Naive thymus-derived CD8-positive, alpha-beta T cell (primary cell): ENCODE measurements at regions of chr1 and their contacts with region 1.

Region 1: DNA sequence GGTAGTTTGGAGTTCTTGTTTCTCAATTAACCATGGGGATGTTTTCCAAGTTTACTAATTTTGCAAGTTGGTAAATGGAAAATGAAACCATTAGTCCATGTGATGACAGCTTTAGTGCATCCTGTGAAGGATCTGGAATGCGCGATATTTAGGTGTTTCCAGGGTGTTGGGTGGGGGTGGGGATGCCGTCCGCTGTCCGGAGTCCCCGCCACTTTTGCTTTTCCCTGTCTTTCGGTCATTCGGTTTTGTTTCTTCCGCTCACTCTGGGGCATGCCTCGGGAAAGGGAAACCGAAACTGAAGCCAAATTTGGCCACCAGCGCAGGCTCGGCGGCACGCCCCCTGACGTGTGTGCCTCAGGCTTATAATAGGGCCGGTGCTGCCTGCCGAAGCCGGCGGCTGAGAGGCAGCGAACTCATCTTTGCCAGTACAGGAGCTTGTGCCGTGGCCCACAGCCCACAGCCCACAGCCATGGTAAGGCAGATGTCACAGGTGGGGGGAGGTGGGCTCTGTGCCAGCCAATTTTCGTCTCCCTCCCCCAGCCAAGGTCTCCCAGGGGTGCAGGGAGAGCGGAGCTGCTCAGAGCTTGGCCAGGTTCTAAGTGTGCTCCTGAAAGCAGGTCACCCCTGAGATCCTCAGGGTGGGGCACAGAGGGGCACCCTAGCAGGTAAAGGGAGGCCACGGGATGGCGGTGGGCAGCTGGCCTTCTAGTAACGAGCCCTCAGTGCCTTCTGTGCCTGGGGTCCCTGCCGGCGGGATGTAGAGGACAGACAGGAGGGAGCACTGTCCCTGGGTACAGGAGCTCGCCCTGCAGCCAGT is at the start of gene ISG15:
- DNase-seq: peak; percentile 78 to 94 (median 86)
- ATAC-seq: peak; percentile 96 to 97
- H3K4me3 Mint-ChIP-seq: peak within 1 kb of the TSS; percentile 92 to 99 (median 97)
- H3K27ac Mint-ChIP-seq: peak within 1 kb of the TSS; percentile 98 to 100 (median 98)
- H3K4me1 Mint-ChIP-seq: peaks cover 13 to 49% (median 37%) of the 10 kb centered on the region in 4 donors
- H3K27me3 Mint-ChIP-seq: peaks cover 0 to 4% (median 0%) of the 10 kb centered on the region in 5 donors
- polyA plus RNA-seq, gene ISG15: 133 to 220 (median 217) TPM

Region 2: DNA sequence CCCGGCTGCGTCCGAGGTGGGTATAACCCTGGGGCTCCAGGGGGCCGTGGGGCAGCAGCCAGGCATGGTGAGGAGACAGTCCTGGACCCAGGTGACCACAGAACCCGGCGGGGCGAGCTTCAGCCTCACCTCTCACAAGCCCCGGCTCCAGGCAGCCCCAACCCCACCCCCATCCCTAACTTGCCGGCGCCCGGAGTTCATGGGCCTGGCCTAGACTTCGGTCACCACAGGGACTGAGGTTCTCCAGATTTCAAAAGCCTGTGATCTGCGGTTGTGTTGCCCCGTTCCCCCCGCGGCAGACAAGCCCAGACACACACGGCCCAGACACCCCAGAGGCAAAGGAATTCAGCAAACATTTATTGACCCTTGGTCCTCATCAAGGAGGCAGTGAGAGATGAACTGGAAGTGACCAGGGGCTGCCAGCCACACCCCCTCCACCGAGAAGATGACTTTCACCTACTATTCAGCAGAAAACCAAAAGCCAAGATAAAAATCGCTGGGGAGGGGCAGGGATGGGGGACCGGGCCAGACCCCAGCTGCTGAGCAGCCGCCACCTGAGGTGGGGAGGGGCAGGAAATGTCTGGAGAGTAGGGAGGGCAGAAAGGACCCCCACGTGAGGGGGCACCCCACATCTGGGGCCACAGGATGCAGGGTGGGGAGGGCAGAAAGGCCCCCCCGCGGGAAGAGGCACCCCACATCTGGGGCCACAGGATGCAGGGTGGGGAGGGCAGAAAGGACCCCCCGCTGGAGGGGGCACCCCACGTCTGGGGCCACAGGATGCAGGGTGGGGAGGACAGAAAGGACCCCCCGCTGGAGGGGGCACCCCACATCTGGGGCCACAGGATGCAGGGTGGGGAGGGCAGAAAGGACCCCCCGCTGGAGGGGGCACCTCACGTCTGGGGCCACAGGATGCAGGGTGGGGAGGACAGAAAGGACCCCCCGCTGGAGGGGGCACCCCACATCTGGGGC is 17.4 kb before region 1 on chr1:
- POLR2A ChIA-PET with region 1: interaction called, 26 read pairs
- DNase-seq: peak in 2 of 10 donors; percentile 25 to 26
- ATAC-seq: no peak
- H3K4me3 Mint-ChIP-seq: peak overlapping the region in 6 of 10 donors; percentile 39 to 65 (median 48)
- H3K27ac Mint-ChIP-seq: peak overlapping the region in 2 of 10 donors; percentile 5 to 52
- H3K4me1 Mint-ChIP-seq: peaks cover 9 to 30% (median 14%) of the 10 kb centered on the region in 4 donors
- H3K27me3 Mint-ChIP-seq: peaks cover 4 to 25% (median 7%) of the 10 kb centered on the region in 5 donors

Region 3: DNA sequence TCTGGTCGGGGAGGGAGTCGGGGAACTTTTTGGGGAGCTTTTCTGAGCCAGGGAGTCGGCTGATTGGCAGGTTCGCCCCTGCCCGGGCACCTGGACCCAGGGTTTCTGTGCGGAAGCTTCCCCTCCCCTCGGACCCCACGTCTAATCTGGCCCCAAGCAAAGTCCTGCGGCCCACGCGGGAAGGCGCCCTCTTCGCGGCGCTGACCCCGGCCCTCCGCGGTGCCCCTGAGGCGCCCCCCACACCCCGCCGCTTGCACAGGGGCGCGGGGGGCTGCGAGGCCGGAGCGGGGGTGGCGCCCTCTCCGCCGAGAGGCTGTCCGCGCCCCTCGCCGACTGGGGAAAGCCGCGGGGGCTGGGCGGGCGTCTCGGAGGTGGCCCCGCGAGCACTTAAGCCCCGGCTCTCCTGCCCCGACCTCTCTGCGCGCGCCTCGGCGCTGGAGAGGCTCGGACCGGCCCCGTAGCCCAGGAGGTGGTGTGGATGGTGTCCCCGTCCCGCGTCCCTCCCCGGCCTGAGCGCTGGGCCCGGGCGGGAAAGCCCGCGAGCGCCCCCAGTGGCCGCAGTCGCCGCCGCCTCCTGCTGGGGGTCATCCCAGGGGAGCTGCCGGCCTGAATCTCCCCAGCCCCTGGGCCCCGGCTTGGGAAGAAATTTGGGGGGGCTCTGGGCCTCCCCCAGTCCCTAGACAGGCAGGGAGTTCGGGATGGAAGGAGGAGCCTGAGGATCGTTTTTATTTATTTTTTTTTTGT is 11.7 kb before region 1 on chr1:
- POLR2A ChIA-PET with region 1: interaction called, 26 read pairs
- DNase-seq: peak in 9 of 10 donors; percentile 25 to 74 (median 65)
- ATAC-seq: peak; percentile 28 to 61
- H3K4me3 Mint-ChIP-seq: peak overlapping the region; percentile 13 to 85 (median 74)
- H3K27ac Mint-ChIP-seq: peak overlapping the region in 3 of 10 donors; percentile 21 to 96 (median 22)
- H3K4me1 Mint-ChIP-seq: peaks cover 17 to 30% (median 20%) of the 10 kb centered on the region in 4 donors
- H3K27me3 Mint-ChIP-seq: peaks cover 13 to 66% (median 25%) of the 10 kb centered on the region in 5 donors